ENCODE measurements at regions of chr1 and their contacts with region 1.

Region 1: DNA sequence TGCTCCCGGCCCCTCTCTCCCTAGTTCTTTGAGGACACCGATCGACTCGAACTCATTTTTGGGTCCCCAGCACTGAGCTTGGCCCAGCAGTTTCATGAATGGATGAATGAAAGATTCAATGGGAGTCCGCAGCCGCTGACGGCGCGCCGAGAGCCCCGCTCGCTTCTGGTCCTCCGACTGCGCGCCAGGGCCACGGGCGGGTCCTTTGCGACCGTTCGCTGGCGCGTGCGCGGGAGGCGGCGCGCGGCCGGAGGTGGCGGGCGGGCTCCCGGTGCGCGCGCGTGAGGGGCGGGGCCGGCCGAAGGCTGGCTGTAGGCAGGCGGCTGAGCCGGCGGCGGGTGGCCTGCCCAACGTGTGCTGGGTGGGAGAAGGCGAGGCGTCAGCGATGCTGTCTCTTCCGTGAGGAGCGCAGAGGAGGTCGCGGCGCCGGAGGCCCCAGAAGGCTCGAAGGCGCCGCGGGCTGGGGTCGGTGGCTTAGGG is at the start of gene MAST2:
- DNase-seq: peak; percentile 73 to 92 (median 84)
- H3K4me3 ChIP-seq: peak within 1 kb of the TSS; percentile 45 to 78 (median 64)
- H3K27ac ChIP-seq: peak within 1 kb of the TSS in 43 of 59 donors; percentile 8 to 86 (median 61)
- H3K27me3 ChIP-seq: no peaks in the 10 kb centered on the region
- CTCF ChIP-seq: peak in 5 of 56 donors; percentile 4 to 27 (median 13)
- total RNA-seq, gene MAST2: 30.0 to 79.1 (median 44.2) TPM

Region 2: DNA sequence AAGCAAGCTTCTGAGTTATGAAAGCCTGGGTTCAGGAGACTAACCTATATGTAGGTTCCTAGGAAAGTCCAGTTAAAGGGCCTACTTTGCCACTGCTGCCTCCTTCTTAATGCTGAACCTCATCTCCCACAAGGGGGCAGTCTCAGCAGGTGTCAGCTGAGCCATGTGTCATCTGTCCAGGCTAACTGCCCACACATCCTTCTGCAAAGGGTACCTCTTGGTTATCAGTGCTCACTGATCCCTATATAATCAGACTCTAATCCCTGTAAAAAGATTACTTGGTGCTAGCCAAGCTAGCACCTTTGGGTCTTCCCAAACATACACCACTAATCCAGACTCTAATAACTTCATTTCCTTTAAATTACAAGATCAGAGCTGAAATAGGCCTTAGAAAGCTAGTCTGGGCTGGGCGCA is 290.7 kb before region 1 on chr1:
- intact Hi-C with region 1: loop called in 1 of 2 experiments (anchors 10 kb)
- DNase-seq: peak in 5 of 10 donors; percentile 45 to 70 (median 49)
- H3K4me3 ChIP-seq: no peak overlapping the region
- H3K27ac ChIP-seq: peak overlapping the region in 47 of 59 donors; percentile 19 to 90 (median 79)
- H3K27me3 ChIP-seq: no peaks in the 10 kb centered on the region
- CTCF ChIP-seq: peak; percentile 36 to 81 (median 68)

Region 3: DNA sequence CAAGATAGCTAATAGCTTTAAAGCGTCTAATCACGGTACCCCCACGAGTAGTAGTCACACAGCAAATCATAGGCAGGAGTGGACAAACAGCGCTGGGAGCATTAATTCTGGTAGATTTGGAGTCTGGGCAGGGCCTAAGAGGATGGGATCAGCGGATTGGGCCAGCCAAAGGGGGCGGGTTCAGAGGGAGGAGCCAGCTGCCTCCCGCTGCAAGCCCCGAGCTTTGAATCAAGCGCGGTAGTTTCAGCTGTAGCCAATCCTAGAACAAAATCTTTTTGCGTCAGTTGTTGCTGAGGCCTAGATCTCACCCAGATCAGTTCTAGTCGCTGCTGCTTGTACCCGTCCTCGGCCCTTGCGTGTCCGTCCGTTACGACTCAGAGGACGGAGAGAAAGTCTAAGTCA is 220.1 kb before region 1 on chr1:
- intact Hi-C with region 1: loop called in 1 of 2 experiments (anchors 5 kb)
- DNase-seq: peak; percentile 84 to 97 (median 96)
- H3K4me3 ChIP-seq: peak overlapping the region; percentile 63 to 100 (median 93)
- H3K27ac ChIP-seq: peak overlapping the region in 58 of 59 donors; percentile 23 to 96 (median 84)
- H3K27me3 ChIP-seq: no peaks in the 10 kb centered on the region
- CTCF ChIP-seq: peak in 6 of 56 donors; percentile 14 to 36 (median 22)

Region 4: GRCh38 chr1:45694823-45695222 is 108.5 kb before region 1 on chr1:
- intact Hi-C with region 1: no loop called
- DNase-seq: no peak
- H3K4me3 ChIP-seq: no peak overlapping the region
- H3K27ac ChIP-seq: no peak overlapping the region
- H3K27me3 ChIP-seq: no peaks in the 10 kb centered on the region
- CTCF ChIP-seq: no peak

Region 5: GRCh38 chr1:45730475-45731339 is 72.6 kb before region 1 on chr1:
- intact Hi-C with region 1: no loop called
- DNase-seq: no peak
- H3K4me3 ChIP-seq: no peak overlapping the region
- H3K27ac ChIP-seq: no peak overlapping the region
- H3K27me3 ChIP-seq: no peaks in the 10 kb centered on the region
- CTCF ChIP-seq: no peak

Region 6: DNA sequence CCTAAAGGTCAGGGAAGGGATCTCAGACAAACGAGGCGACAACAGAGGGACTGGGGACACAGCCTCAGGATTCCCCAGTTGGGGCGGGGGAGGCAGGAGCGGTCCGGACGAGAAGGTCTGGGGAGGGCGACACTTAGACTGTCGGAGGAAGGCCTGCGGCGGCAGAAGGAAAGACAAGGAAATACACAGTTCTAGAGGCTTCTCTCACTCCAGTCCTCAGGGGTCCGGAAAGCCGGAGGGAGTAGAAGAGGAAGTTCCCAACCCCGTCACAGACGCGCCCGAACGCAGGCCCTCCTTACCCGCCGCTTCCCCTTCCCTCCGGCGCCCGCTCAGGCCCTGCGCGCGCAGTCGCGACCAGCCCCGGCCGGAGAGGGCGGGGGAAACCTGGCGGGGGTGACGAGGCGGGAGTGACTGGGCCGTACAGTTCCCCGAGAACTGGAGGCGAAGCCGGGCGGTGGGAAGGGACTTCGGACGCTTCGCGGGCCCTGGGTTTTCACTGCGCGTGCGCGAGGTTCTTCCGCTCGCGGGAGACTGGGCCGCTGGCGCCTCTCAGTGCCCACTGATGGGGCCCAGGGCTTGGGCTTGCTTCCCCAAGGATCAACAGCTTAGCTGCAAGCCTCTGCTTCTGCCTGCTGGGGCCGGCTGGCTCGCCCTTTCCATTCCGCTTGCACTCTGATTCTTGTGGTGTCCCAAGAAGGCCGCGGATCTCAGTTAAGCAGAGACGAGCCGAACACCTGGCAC is 52.9 kb before region 1 on chr1 and contains the start of gene IPP:
- intact Hi-C with region 1: loop called (anchors 2 to 5 kb)
- DNase-seq: peak; percentile 87 to 95 (median 92)
- H3K4me3 ChIP-seq: peak within 1 kb of the TSS; percentile 60 to 94 (median 78)
- H3K27ac ChIP-seq: peak within 1 kb of the TSS; percentile 84 to 99 (median 98)
- H3K27me3 ChIP-seq: no peaks in the 10 kb centered on the region
- CTCF ChIP-seq: peak in 54 of 56 donors; percentile 18 to 77 (median 52)
- total RNA-seq, gene IPP: 9.4 to 25.7 (median 16.6) TPM

Region 7: GRCh38 chr1:45876000-45876617 is 72.8 kb after region 1 on chr1:
- intact Hi-C with region 1: loop called in 1 of 2 experiments (anchors 10 kb)
- DNase-seq: no peak
- H3K4me3 ChIP-seq: no peak overlapping the region
- H3K27ac ChIP-seq: no peak overlapping the region
- H3K27me3 ChIP-seq: no peaks in the 10 kb centered on the region
- CTCF ChIP-seq: no peak

Region 8: DNA sequence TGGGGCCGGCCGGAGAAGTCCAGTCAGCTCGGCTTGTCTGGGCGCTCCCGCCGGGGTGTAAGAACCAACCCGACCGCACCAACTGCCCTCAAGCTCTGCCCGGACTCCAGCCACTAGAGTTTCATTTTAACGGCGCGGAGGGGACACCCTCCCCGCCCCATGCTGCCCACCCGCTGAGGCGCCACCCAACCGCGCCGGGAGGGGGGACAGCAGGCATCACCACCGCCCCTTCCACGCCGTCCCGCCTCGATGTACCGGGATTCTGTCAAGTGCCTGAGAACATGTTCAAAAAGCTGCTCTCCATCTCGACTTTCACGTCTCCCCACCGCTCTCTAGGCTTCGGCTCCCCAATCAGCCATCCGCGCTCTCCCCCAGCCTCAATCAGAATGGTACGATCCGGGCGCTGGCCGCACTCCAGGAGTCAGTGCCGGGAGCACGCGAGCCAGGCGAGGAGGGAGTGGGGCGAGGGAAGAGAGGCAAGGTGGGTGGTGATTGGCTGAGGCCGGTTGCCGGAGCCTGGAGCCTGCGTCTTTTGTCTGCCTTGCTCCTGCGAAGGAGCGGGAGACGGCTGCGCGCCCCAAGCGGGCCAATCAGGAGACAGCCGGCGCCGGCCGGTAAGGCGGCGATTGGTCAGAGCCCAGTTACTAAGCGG is 329.3 kb after region 1 on chr1 and contains the start of gene PIK3R3:
- intact Hi-C with region 1: no loop called
- DNase-seq: peak; percentile 93 to 99 (median 98)
- H3K4me3 ChIP-seq: peak within 1 kb of the TSS; percentile 55 to 97 (median 79)
- H3K27ac ChIP-seq: peak within 1 kb of the TSS; percentile 62 to 99 (median 96)
- H3K27me3 ChIP-seq: peaks cover 0 to 18% (median 0%) of the 10 kb centered on the region in 45 donors
- CTCF ChIP-seq: peak in 31 of 56 donors; percentile 10 to 55 (median 26)
- total RNA-seq, gene PIK3R3: 17.6 to 51.8 (median 34.2) TPM